Vagina (tissue), 2 donors: ENCODE measurements at regions of chr9 and their contacts with region 1.

Region 1: GRCh38 chr9:75993434-75993833 is 103.0 kb downstream of the PCSK5 start:
- DNase-seq: no peak
- H3K4me3 ChIP-seq: no peak overlapping the region
- H3K27ac ChIP-seq: no peak overlapping the region
- H3K4me1 ChIP-seq: no peaks in the 10 kb centered on the region
- H3K27me3 ChIP-seq: no peaks in the 10 kb centered on the region
- CTCF ChIP-seq: no peak
- POLR2A ChIP-seq: no peak

Region 2: GRCh38 chr9:77417566-77417965 is 1424.1 kb after region 1 on chr9:
- intact Hi-C with region 1: loop called (anchors 10 kb)
- DNase-seq: no peak
- H3K4me3 ChIP-seq: no peak overlapping the region
- H3K27ac ChIP-seq: peak overlapping the region; percentile 30
- H3K4me1 ChIP-seq: no peaks in the 10 kb centered on the region
- H3K27me3 ChIP-seq: no peaks in the 10 kb centered on the region
- CTCF ChIP-seq: no peak
- POLR2A ChIP-seq: no peak